ENCODE measurements at regions of chr20 and their contacts with region 1.

Region 1: GRCh38 chr20:48620519-48621254 is 207.1 kb downstream of the PREX1 start:
- DNase-seq: peak; percentile 99
- H3K4me3 Mint-ChIP-seq: peak overlapping the region; percentile 65
- H3K27ac Mint-ChIP-seq: peak overlapping the region; percentile 83
- H3K4me1 Mint-ChIP-seq: peaks cover 21% of the 10 kb centered on the region
- H3K27me3 Mint-ChIP-seq: no peaks in the 10 kb centered on the region
- CTCF ChIP-seq: peak; percentile 97

Region 2: DNA sequence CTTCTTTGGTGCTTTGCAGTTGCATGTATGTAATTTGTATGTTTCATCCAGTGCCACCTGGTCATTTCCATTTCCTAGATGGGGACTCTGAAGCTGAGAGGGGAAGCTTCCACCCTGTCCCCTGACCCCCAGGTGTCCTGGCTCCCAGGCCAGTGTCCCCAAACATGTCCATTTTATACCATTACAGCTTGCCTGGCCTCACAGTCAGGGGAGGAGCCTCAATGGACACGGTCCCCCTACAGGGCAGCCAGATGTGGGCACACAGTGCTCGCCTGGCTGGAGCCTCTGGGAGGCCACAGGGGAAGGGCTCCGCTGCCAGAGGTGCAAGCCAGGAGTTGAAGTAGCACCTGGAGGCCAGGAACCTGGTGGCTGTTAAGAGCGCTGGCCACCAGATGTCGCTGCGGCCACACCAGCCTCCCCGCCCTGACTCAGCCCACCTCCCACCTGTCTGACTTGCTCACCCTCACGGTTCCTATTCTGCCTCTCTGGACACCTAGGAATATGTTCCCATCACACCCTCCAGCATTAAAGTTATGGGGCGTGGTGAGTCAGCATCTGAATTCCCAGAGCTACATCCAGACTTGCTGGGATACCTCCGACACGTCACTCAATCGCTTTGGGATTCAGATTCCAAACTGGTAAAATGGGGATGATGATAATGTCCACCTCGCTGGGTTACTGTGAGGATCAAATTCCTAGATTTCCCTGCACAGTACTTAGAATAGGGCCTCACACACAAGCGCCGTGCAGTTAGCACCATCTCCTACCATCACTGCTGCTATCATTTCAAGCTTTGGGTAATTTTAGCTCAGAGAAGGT is 942.8 kb before region 1 on chr20:
- CTCF ChIA-PET with region 1: interaction called, 12 read pairs
- intact Hi-C with region 1: loop called (anchors 5 kb)
- DNase-seq: peak; percentile 87
- H3K4me3 Mint-ChIP-seq: no peak overlapping the region
- H3K27ac Mint-ChIP-seq: no peak overlapping the region
- H3K4me1 Mint-ChIP-seq: no peaks in the 10 kb centered on the region
- H3K27me3 Mint-ChIP-seq: no peaks in the 10 kb centered on the region
- CTCF ChIP-seq: peak; percentile 98

Region 3: GRCh38 chr20:47857566-47858471 is 762.9 kb before region 1 on chr20:
- CTCF ChIA-PET with region 1: interaction called, 11 read pairs
- intact Hi-C with region 1: loop called (anchors 2 kb)
- DNase-seq: no peak
- H3K4me3 Mint-ChIP-seq: no peak overlapping the region
- H3K27ac Mint-ChIP-seq: peak overlapping the region; percentile 40
- H3K4me1 Mint-ChIP-seq: peaks cover 30% of the 10 kb centered on the region
- H3K27me3 Mint-ChIP-seq: peaks cover 2% of the 10 kb centered on the region
- CTCF ChIP-seq: no peak

Region 4: DNA sequence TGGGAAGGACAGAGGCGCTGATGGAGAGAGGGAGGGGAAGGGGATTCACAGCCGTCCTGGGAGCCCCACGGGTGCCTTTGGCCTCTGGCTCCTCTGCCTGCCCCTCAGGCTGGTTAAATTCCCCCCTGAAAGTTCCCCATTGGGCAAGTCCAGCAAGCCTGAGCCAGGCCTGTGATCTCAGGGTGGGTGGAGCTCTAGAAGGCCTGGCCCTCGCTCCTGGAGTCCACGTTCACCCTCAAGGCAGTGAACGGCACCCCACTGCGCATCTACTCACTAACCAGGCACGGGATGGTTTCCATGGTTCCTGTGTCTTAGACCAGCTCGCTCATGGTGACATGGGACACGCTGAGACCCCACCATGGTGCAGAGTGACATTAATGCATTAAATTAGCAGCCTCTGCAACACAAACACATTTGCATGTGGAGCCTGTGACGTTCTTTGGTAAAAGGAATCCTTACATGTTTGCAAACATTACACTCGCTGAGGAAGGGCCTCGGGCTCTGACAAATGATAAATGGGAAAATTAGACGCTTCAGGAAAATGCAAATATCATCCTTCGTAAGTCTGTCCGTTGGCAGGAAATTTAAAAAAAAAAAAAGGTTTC is 245.6 kb before region 1 on chr20:
- CTCF ChIA-PET with region 1: interaction called, 19 read pairs
- intact Hi-C with region 1: loop called (anchors 1 kb)
- DNase-seq: no peak
- H3K4me3 Mint-ChIP-seq: peak overlapping the region; percentile 68
- H3K27ac Mint-ChIP-seq: peak overlapping the region; percentile 99
- H3K4me1 Mint-ChIP-seq: peaks cover 83% of the 10 kb centered on the region
- H3K27me3 Mint-ChIP-seq: no peaks in the 10 kb centered on the region
- CTCF ChIP-seq: no peak

Region 5: DNA sequence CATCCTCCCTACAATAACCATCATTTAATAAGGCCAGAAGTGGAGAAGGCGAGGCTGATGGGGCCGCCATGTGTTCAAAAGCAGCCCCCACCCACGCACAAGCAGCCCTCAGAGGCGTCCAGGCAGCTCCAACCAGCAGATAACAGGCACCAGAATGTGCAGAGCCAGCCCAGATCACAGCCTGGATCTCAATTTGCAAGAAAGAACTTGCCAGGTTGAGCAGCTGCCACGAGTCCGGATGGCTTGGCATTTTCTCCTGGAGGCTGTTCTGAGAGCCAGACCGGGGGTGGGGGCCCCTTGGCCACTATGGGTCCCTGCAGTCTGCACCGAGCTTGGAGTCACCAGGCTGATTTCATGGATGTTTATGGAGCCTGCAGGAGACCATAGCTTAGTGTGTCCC is 131.0 kb before region 1 on chr20:
- CTCF ChIA-PET with region 1: interaction called, 15 read pairs
- intact Hi-C with region 1: loop called (anchors 2 kb)
- DNase-seq: no peak
- H3K4me3 Mint-ChIP-seq: no peak overlapping the region
- H3K27ac Mint-ChIP-seq: no peak overlapping the region
- H3K4me1 Mint-ChIP-seq: peaks cover 51% of the 10 kb centered on the region
- H3K27me3 Mint-ChIP-seq: peaks cover 17% of the 10 kb centered on the region
- CTCF ChIP-seq: no peak

Region 6: DNA sequence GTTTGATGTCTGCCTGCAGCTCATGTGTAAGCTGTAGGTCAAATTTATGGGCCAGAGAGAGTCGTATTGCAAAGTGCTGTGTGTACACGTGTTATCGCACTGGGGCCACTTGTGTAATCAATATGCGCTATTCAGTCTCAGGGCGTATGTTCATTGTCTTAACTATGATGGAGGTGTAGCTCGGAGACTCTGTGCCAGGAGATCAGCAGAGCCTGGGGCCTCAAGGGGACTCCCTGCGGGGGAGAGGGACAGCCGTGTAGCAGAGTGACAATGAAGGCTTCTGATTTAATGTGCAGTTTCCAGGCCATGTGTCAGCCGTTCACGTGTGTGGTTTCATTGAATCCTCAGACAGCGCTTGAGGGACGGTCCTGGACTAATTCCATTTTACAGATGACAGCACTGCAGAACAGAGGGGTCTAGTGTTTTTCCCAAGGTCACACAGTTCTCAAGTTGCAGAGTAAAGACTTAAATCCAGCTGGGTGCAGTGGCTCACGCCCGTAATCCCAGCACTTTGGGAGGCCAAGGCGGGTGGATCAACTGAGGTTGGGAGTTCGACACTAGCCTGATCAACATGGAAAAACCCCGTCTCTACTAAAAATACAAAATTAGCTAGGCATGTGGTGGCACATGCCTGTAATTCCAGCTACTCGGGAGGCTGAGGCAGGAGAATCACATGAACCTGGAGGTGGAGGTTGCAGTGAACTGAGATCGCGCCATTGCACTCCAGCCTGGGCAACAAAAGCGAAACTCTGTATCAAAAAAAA is 35.4 kb before region 1 on chr20:
- CTCF ChIA-PET with region 1: interaction called, 19 read pairs
- intact Hi-C with region 1: no loop called
- DNase-seq: no peak
- H3K4me3 Mint-ChIP-seq: no peak overlapping the region
- H3K27ac Mint-ChIP-seq: no peak overlapping the region
- H3K4me1 Mint-ChIP-seq: peaks cover 29% of the 10 kb centered on the region
- H3K27me3 Mint-ChIP-seq: peaks cover 35% of the 10 kb centered on the region
- CTCF ChIP-seq: no peak

Region 7: DNA sequence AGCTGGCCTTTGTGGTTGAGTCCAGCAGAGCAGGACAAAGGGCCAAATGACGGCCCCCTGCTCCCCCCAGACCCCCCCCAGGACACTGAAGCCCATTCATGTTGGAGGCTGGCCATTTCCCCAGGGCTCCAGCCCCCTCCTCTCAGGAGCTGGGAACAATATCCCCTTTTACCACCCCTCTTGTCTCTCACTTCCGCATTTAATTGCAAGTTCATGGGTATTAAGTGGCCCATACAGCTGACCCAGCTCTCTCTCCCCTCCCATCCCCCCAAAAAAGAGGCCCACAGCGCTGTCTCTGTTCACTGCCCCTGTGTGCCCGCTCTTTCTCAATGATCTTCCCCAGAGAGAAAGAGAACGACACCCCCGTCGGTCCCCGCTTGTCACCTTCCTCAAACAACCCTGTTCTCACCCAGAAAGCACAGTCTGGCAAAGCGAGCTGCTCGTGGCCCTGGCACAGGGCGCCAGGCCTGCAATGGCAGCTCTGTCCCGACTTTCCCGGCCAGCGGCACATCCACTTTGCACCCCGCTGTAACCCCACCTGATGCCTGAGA is 176.7 kb after region 1 on chr20:
- CTCF ChIA-PET with region 1: no interaction called
- intact Hi-C with region 1: no loop called
- DNase-seq: no peak
- H3K4me3 Mint-ChIP-seq: no peak overlapping the region
- H3K27ac Mint-ChIP-seq: no peak overlapping the region
- H3K4me1 Mint-ChIP-seq: no peaks in the 10 kb centered on the region
- H3K27me3 Mint-ChIP-seq: peaks cover 48% of the 10 kb centered on the region
- CTCF ChIP-seq: no peak

Measured in Calu3 (cell line).